Transverse colon (tissue), 4 donors: ENCODE measurements at regions of chr1 and their contacts with region 1.

Region 1: DNA sequence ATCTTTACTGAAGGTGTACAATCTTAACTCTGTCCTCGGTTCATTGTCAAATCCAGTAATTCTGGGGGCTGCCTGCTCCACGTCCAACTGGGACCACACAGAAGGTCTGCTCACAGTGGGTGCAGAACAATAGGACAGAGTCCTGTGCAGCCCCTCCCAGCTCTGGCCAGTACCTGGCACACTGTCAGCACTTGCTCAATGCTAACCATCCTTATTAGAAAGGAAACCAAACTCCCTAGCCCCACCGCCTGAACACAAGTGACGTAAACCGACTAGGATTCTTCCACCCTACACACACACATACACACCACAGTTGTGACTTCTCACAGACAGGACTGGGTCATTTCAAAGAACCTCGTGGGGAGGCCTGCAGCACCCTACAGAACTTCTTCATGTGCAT is 5.2 kb downstream of the BCAR3 start:
- DNase-seq: no peak
- H3K4me3 ChIP-seq: no peak overlapping the region
- H3K27ac ChIP-seq: no peak overlapping the region
- H3K4me1 ChIP-seq: peaks cover 22 to 53% (median 32%) of the 10 kb centered on the region in 4 donors
- H3K27me3 ChIP-seq: no peaks in the 10 kb centered on the region
- CTCF ChIP-seq: no peak
- EP300 ChIP-seq: no peak
- POLR2A ChIP-seq: no peak

Region 2: DNA sequence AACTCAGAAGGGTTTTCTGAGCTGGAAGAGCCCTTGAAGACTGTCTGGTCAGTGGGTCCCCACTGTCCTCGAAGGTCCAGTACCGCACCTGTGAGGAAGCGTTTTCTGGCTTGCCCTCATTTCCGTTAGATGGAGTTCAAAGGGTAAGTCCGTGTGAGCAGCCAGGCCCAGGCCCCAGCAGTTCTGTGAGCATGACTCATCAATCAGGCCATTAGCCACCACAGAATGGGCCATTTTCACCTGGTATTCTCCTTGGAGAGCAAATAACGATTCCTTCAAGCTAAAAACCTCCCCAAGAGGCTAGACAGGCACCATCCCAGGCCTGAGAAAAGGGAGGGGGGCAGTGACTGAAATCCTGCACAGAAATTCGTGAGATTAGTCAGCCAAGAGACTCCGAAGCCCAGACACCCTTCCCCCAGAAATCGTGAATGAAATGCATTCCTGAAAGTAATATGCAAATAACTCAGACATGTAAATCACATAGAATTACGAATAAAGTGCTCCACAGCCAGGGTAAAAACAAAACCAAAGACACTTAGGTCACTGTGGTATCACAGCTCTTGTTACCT is 60.8 kb before region 1 on chr1:
- in situ Hi-C with region 1: no loop called
- intact Hi-C with region 1: no loop called
- DNase-seq: peak; percentile 28
- H3K4me3 ChIP-seq: no peak overlapping the region
- H3K27ac ChIP-seq: peak overlapping the region; percentile 42 to 91 (median 64)
- H3K4me1 ChIP-seq: peaks cover 30 to 76% (median 62%) of the 10 kb centered on the region in 4 donors
- H3K27me3 ChIP-seq: no peaks in the 10 kb centered on the region
- CTCF ChIP-seq: no peak
- EP300 ChIP-seq: no peak
- POLR2A ChIP-seq: no peak

Region 3: DNA sequence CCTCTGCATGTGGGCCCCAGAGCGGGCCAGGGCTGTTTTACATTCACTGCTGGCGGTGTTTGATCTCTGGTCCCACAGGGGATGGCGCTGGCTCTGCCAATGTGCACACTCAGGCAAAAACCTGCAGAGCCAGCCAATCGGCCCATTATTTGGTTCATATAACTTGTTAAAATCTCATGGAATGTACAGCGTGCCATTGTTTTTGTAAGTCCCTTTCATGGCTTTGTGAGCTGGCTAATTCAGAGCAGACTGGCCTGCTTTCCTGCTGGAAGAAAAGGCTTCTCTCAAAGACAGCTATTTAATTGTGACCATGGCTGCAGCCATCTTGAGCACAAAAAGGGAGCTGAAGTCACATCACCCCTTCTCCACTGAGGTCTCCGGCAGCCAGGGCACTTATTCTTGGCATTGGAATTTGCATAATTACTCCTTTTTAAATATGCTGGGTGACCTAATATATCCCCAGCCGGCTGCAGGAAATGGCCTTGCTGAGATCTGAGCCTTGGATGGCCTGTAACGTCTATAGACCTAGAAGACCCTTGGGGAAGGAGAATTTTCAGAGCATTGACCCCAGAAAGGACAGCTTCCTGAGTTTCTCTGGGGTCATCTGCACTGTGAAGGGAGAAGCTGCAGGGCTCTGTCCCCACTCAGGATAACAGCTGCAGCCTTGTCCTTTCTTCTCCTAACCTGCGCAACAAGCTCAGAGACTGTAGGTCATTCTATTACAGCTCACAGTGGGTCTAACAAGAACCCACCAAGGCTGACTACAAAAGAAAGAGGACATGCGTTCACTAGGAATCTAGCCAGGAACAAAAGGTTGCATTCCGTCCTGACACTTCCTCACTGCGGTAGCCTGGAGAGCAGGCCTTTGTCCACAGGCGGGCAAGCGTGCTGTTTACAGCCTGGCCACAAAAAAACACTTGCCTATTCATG is 40.5 kb before region 1 on chr1:
- in situ Hi-C with region 1: no loop called
- intact Hi-C with region 1: loop called (anchors 5 kb)
- DNase-seq: no peak
- H3K4me3 ChIP-seq: no peak overlapping the region
- H3K27ac ChIP-seq: peak overlapping the region in 2 of 4 donors; percentile 17 to 32
- H3K4me1 ChIP-seq: no peaks in the 10 kb centered on the region
- H3K27me3 ChIP-seq: no peaks in the 10 kb centered on the region
- CTCF ChIP-seq: no peak
- EP300 ChIP-seq: no peak
- POLR2A ChIP-seq: no peak

Region 4: GRCh38 chr1:93732514-93732913 is 56.1 kb after region 1 on chr1:
- in situ Hi-C with region 1: no loop called
- intact Hi-C with region 1: no loop called
- DNase-seq: no peak
- H3K4me3 ChIP-seq: no peak overlapping the region
- H3K27ac ChIP-seq: no peak overlapping the region
- H3K4me1 ChIP-seq: no peaks in the 10 kb centered on the region
- H3K27me3 ChIP-seq: no peaks in the 10 kb centered on the region
- CTCF ChIP-seq: no peak
- EP300 ChIP-seq: no peak
- POLR2A ChIP-seq: no peak

Region 5: DNA sequence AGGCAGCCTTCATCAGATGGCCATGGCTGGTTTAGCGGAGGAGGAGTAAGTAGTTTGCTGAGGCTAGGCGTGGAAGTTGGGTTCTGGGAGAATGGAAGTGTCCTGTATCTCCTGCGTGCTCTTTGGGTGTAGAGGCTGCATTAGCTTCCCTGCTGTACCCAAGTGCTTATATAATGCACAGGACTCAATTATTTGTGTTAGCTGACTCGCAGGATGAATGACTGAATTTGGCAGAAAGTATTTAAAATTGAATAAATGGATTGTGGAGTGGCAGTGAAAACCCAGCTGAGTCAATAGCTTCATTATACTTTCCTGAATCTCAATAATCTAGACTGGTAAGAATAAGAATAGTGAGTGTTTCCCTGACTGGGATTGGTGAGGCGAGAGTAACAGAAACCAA is 188.8 kb after region 1 on chr1:
- in situ Hi-C with region 1: no loop called
- intact Hi-C with region 1: no loop called
- DNase-seq: no peak
- H3K4me3 ChIP-seq: no peak overlapping the region
- H3K27ac ChIP-seq: no peak overlapping the region
- H3K4me1 ChIP-seq: no peaks in the 10 kb centered on the region
- H3K27me3 ChIP-seq: no peaks in the 10 kb centered on the region
- CTCF ChIP-seq: no peak
- EP300 ChIP-seq: no peak
- POLR2A ChIP-seq: no peak